Naive thymus-derived CD4-positive, alpha-beta T cell (primary cell): ENCODE measurements at regions of chr19 and their contacts with region 1.

Region 1: DNA sequence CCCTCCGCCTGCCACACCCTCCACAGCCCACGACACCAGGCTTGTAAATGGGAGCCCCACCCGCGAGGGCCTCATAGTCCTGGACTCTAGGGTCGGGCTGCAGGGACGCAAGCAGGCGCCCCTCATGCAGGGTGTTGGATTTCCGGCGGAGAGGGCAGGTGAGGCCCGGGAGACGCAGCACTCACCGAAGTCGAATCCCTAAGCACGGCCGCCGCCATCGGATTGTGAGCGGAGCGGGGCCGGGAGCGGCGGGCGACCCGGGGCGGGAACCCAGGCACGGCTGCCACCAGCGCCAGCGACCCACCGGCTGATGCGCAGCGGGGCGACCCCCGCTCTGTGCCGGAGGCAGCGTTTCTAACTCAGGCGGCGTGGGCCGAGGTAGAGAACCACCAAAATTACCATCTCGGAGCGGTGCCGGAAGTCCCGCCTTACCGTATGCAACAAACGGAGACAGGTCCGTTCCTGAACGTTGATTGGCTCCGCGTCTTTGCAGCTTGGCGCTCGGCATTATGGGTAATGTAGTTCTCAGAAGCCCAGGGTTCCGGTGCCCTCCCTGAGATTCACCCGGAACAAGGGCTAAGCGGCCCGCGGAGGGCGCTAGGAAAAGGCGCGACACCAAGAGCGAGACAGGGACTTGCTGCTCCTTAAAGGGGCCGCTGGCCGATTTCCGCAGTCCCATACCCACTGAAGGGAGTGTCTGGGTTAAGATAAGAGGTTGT is at the start of gene ZNF416:
- DNase-seq: peak; percentile 76 to 98 (median 96)
- ATAC-seq: peak; percentile 99
- H3K4me3 ChIP-seq: peak within 1 kb of the TSS; percentile 73
- H3K4me3 Mint-ChIP-seq: peak within 1 kb of the TSS; percentile 75 to 91 (median 85)
- H3K27ac ChIP-seq: peak within 1 kb of the TSS; percentile 80
- H3K27ac Mint-ChIP-seq: peak within 1 kb of the TSS; percentile 78 to 91 (median 87)
- H3K4me1 ChIP-seq: peaks cover 16 to 20% of the 10 kb centered on the region in 2 donors
- H3K4me1 Mint-ChIP-seq: peaks cover 13 to 35% (median 26%) of the 10 kb centered on the region in 7 donors
- H3K27me3 ChIP-seq: no peaks in the 10 kb centered on the region
- H3K27me3 Mint-ChIP-seq: no peaks in the 10 kb centered on the region
- total RNA-seq, gene ZNF416: 4.4 to 13.8 (median 5.7) TPM

Region 2: GRCh38 chr19:56314562-56315077 is 1264.0 kb before region 1 on chr19 and contains the start of gene ZSCAN5A:
- CTCF ChIA-PET with region 1: no interaction called
- POLR2A ChIA-PET with region 1: no interaction called
- intact Hi-C with region 1: loop called in 1 of 2 experiments (anchors 10 kb)
- DNase-seq: peak; percentile 93 to 99 (median 99)
- ATAC-seq: peak; percentile 85
- H3K4me3 ChIP-seq: peak within 1 kb of the TSS; percentile 86
- H3K4me3 Mint-ChIP-seq: peak within 1 kb of the TSS; percentile 79 to 100 (median 96)
- H3K27ac ChIP-seq: peak within 1 kb of the TSS; percentile 97
- H3K27ac Mint-ChIP-seq: peak within 1 kb of the TSS; percentile 95 to 100 (median 99)
- H3K4me1 ChIP-seq: peaks cover 4 to 10% of the 10 kb centered on the region in 2 donors
- H3K4me1 Mint-ChIP-seq: peaks cover 13 to 41% (median 26%) of the 10 kb centered on the region in 7 donors
- H3K27me3 ChIP-seq: no peaks in the 10 kb centered on the region
- H3K27me3 Mint-ChIP-seq: no peaks in the 10 kb centered on the region
- total RNA-seq, gene ZSCAN5A: 8.0 to 15.4 (median 11.8) TPM

Region 3: DNA sequence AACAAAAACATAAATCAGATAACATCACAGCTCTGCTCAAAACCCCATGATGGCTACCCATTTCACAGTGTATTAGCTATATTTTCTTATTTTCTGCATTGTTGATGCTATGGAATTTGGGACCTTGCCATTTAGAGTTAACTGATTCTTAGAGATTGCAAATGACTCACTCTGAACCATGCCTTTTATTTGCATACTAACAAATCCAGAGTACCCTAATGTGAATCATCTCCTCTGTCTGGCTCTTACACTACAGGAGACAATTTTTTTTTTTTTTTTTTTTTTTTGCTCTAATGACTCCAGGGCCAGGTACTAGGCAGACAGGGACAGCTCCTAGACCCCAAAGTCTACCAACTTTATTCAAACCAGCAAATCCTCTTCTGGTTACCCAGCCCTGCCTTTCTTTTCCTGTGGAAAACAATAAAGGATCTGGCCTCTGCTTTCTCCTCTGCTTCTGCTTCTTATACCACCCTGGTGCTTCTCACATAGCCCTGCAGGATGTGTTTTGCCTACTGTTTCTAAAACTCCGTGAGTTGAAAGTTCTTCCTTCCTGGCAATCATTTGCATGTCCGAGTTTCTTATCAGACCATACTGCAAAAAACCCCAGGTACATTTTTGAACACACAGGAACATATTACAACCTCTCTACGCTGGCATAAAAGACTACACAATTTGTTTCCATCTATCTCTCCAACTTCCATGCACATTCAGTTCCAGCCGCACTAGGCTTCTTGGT is 309.0 kb before region 1 on chr19:
- CTCF ChIA-PET with region 1: no interaction called
- POLR2A ChIA-PET with region 1: no interaction called
- intact Hi-C with region 1: no loop called
- DNase-seq: no peak
- ATAC-seq: no peak
- H3K4me3 ChIP-seq: no peak overlapping the region
- H3K4me3 Mint-ChIP-seq: no peak overlapping the region
- H3K27ac ChIP-seq: no peak overlapping the region
- H3K27ac Mint-ChIP-seq: no peak overlapping the region
- H3K4me1 ChIP-seq: no peaks in the 10 kb centered on the region
- H3K4me1 Mint-ChIP-seq: peaks cover 0 to 6% (median 0%) of the 10 kb centered on the region in 7 donors
- H3K27me3 ChIP-seq: no peaks in the 10 kb centered on the region
- H3K27me3 Mint-ChIP-seq: no peaks in the 10 kb centered on the region

Region 4: GRCh38 chr19:57382806-57383488 is 195.7 kb before region 1 on chr19:
- CTCF ChIA-PET with region 1: no interaction called
- POLR2A ChIA-PET with region 1: no interaction called
- intact Hi-C with region 1: no loop called
- DNase-seq: no peak
- ATAC-seq: no peak
- H3K4me3 ChIP-seq: no peak overlapping the region
- H3K4me3 Mint-ChIP-seq: no peak overlapping the region
- H3K27ac ChIP-seq: no peak overlapping the region
- H3K27ac Mint-ChIP-seq: no peak overlapping the region
- H3K4me1 ChIP-seq: no peaks in the 10 kb centered on the region
- H3K4me1 Mint-ChIP-seq: no peaks in the 10 kb centered on the region
- H3K27me3 ChIP-seq: no peaks in the 10 kb centered on the region
- H3K27me3 Mint-ChIP-seq: peaks cover 0 to 3% (median 0%) of the 10 kb centered on the region in 5 donors

Region 5: GRCh38 chr19:57410877-57411671 is 167.6 kb before region 1 on chr19 and contains the start of gene ZNF17:
- CTCF ChIA-PET with region 1: no interaction called
- POLR2A ChIA-PET with region 1: no interaction called
- intact Hi-C with region 1: loop called in 1 of 2 experiments (anchors 1 kb)
- DNase-seq: peak; percentile 72 to 95 (median 88)
- ATAC-seq: peak; percentile 100
- H3K4me3 ChIP-seq: peak within 1 kb of the TSS; percentile 80
- H3K4me3 Mint-ChIP-seq: peak within 1 kb of the TSS; percentile 85 to 97 (median 96)
- H3K27ac ChIP-seq: peak within 1 kb of the TSS; percentile 80
- H3K27ac Mint-ChIP-seq: peak within 1 kb of the TSS; percentile 78 to 96 (median 92)
- H3K4me1 ChIP-seq: peaks cover 3 to 8% of the 10 kb centered on the region in 2 donors
- H3K4me1 Mint-ChIP-seq: peaks cover 20 to 46% (median 34%) of the 10 kb centered on the region in 7 donors
- H3K27me3 ChIP-seq: no peaks in the 10 kb centered on the region
- H3K27me3 Mint-ChIP-seq: no peaks in the 10 kb centered on the region
- total RNA-seq, gene ZNF17: 9.3 to 27.8 (median 17.2) TPM

Region 6: GRCh38 chr19:57515234-57515633 is 63.4 kb before region 1 on chr19:
- CTCF ChIA-PET with region 1: no interaction called
- POLR2A ChIA-PET with region 1: no interaction called
- intact Hi-C with region 1: no loop called
- DNase-seq: no peak
- ATAC-seq: no peak
- H3K4me3 ChIP-seq: no peak overlapping the region
- H3K4me3 Mint-ChIP-seq: no peak overlapping the region
- H3K27ac ChIP-seq: no peak overlapping the region
- H3K27ac Mint-ChIP-seq: no peak overlapping the region
- H3K4me1 ChIP-seq: no peaks in the 10 kb centered on the region
- H3K4me1 Mint-ChIP-seq: no peaks in the 10 kb centered on the region
- H3K27me3 ChIP-seq: no peaks in the 10 kb centered on the region
- H3K27me3 Mint-ChIP-seq: no peaks in the 10 kb centered on the region

Region 7: GRCh38 chr19:57546513-57546912 is 32.1 kb before region 1 on chr19:
- CTCF ChIA-PET with region 1: no interaction called
- POLR2A ChIA-PET with region 1: no interaction called
- intact Hi-C with region 1: no loop called
- DNase-seq: no peak
- ATAC-seq: no peak
- H3K4me3 ChIP-seq: peak overlapping the region; percentile 15
- H3K4me3 Mint-ChIP-seq: no peak overlapping the region
- H3K27ac ChIP-seq: no peak overlapping the region
- H3K27ac Mint-ChIP-seq: no peak overlapping the region
- H3K4me1 ChIP-seq: no peaks in the 10 kb centered on the region
- H3K4me1 Mint-ChIP-seq: peaks cover 0 to 3% (median 0%) of the 10 kb centered on the region in 7 donors
- H3K27me3 ChIP-seq: no peaks in the 10 kb centered on the region
- H3K27me3 Mint-ChIP-seq: no peaks in the 10 kb centered on the region

Region 8: GRCh38 chr19:57559404-57560025 is 19.1 kb before region 1 on chr19 and contains the start of gene ZNF550:
- CTCF ChIA-PET with region 1: no interaction called
- POLR2A ChIA-PET with region 1: no interaction called
- intact Hi-C with region 1: loop called (anchors 1 kb)
- DNase-seq: peak; percentile 71 to 85 (median 84)
- ATAC-seq: peak; percentile 99
- H3K4me3 ChIP-seq: peak within 1 kb of the TSS; percentile 89
- H3K4me3 Mint-ChIP-seq: peak within 1 kb of the TSS; percentile 87 to 99 (median 98)
- H3K27ac ChIP-seq: peak within 1 kb of the TSS; percentile 82
- H3K27ac Mint-ChIP-seq: peak within 1 kb of the TSS; percentile 81 to 96 (median 91)
- H3K4me1 ChIP-seq: peaks cover 16 to 19% of the 10 kb centered on the region in 2 donors
- H3K4me1 Mint-ChIP-seq: peaks cover 21 to 45% (median 33%) of the 10 kb centered on the region in 7 donors
- H3K27me3 ChIP-seq: no peaks in the 10 kb centered on the region
- H3K27me3 Mint-ChIP-seq: peaks cover 0 to 16% (median 4%) of the 10 kb centered on the region in 5 donors
- total RNA-seq, gene ZNF550: 12.9 to 56.2 (median 23.5) TPM

Region 9: GRCh38 chr19:57632987-57633831 is 54.6 kb after region 1 on chr19 and contains the start of gene ZNF211:
- CTCF ChIA-PET with region 1: no interaction called
- POLR2A ChIA-PET with region 1: no interaction called
- intact Hi-C with region 1: loop called (anchors 1 to 2 kb)
- DNase-seq: peak; percentile 74 to 89 (median 86)
- ATAC-seq: peak; percentile 100
- H3K4me3 ChIP-seq: peak within 1 kb of the TSS; percentile 87
- H3K4me3 Mint-ChIP-seq: peak within 1 kb of the TSS; percentile 87 to 97 (median 94)
- H3K27ac ChIP-seq: peak within 1 kb of the TSS; percentile 90
- H3K27ac Mint-ChIP-seq: peak within 1 kb of the TSS; percentile 81 to 97 (median 89)
- H3K4me1 ChIP-seq: peaks cover 3 to 13% of the 10 kb centered on the region in 2 donors
- H3K4me1 Mint-ChIP-seq: peaks cover 21 to 36% (median 28%) of the 10 kb centered on the region in 7 donors
- H3K27me3 ChIP-seq: no peaks in the 10 kb centered on the region
- H3K27me3 Mint-ChIP-seq: no peaks in the 10 kb centered on the region
- total RNA-seq, gene ZNF211: 18.0 to 56.7 (median 33.7) TPM

Region 10: DNA sequence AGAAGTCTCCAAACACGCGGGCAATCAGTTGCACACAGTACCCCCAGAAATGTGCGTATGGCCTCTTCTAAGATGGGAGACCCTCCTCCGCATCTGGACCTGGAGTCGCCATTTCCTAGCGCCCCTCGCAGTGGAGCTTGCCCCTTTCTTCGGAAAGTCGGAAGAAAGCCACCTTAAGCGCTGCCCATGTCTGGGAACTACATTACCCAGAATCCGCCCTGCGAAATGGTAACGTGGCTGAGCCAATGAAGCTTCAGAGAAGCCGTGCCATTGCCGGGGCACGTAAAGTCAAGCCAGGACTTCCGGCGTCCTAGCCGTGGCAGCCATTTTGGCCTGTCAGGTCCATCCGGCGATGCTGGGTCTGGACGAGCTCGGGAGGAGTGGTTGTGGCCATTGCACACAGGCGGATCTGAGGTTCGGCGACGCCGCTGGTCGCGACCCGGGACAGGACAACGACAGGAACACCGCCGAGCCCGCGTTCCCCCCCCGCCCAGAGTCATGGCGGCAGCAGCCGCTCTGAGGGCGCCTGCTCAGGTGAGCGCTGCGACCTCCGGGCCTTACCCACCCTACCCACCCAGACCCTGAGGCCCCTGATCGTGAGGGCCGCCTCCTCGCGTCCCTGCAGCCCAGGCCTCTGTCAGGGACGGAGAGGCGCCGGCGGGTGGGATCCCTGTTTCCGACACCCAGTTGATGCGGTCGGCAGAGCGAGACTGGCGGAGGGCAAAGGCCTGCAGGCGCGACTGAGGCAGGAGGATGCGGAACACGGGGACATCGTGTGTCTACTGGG is 190.9 kb after region 1 on chr19 and contains the start of gene ZNF586:
- CTCF ChIA-PET with region 1: no interaction called
- POLR2A ChIA-PET with region 1: interaction called, 3 read pairs
- intact Hi-C with region 1: loop called in 1 of 2 experiments (anchors 5 kb)
- DNase-seq: peak; percentile 64 to 89 (median 82)
- ATAC-seq: peak; percentile 99
- H3K4me3 ChIP-seq: peak within 1 kb of the TSS; percentile 91
- H3K4me3 Mint-ChIP-seq: peak within 1 kb of the TSS; percentile 90 to 98 (median 96)
- H3K27ac ChIP-seq: peak within 1 kb of the TSS; percentile 86
- H3K27ac Mint-ChIP-seq: peak within 1 kb of the TSS; percentile 79 to 97 (median 94)
- H3K4me1 ChIP-seq: peaks cover 6 to 12% of the 10 kb centered on the region in 2 donors
- H3K4me1 Mint-ChIP-seq: peaks cover 8 to 47% (median 38%) of the 10 kb centered on the region in 7 donors
- H3K27me3 ChIP-seq: no peaks in the 10 kb centered on the region
- H3K27me3 Mint-ChIP-seq: no peaks in the 10 kb centered on the region
- total RNA-seq, gene ZNF586: 16.4 to 47.5 (median 42.6) TPM

Region 11: GRCh38 chr19:58002384-58003173 is 423.9 kb after region 1 on chr19 and contains the start of gene ZNF606:
- CTCF ChIA-PET with region 1: no interaction called
- POLR2A ChIA-PET with region 1: no interaction called
- intact Hi-C with region 1: loop called (anchors 1 to 2 kb)
- DNase-seq: peak; percentile 79 to 87 (median 85)
- ATAC-seq: peak; percentile 100
- H3K4me3 ChIP-seq: peak within 1 kb of the TSS; percentile 91
- H3K4me3 Mint-ChIP-seq: peak within 1 kb of the TSS; percentile 80 to 90 (median 88)
- H3K27ac ChIP-seq: peak within 1 kb of the TSS; percentile 90
- H3K27ac Mint-ChIP-seq: peak within 1 kb of the TSS; percentile 79 to 94 (median 88)
- H3K4me1 ChIP-seq: peaks cover 14 to 18% of the 10 kb centered on the region in 2 donors
- H3K4me1 Mint-ChIP-seq: peaks cover 15 to 40% (median 27%) of the 10 kb centered on the region in 7 donors
- H3K27me3 ChIP-seq: no peaks in the 10 kb centered on the region
- H3K27me3 Mint-ChIP-seq: no peaks in the 10 kb centered on the region
- total RNA-seq, gene ZNF606: 11.9 to 37.5 (median 15.3) TPM